Activated T-helper 1 cell treated with anti-CD3 and anti-CD28 coated beads, Interleukin-12 subunit alpha, Interleukin-12 subunit beta, Interleukin-2, Interleukin-4 antibody, amounts not matched to agents 30 ng/mL and 10 ng/mL and 1 ng/mL, durations not matched to agents 14 hours and 24 hours and 36 hours (primary cell): ENCODE measurements at regions of chr10 and their contacts with region 1.

Region 1: GRCh38 chr10:124916585-124917427 is 25.1 kb upstream of the ZRANB1 start:
- DNase-seq: peak; percentile 96
- H3K4me3 Mint-ChIP-seq: peak overlapping the region; percentile 93
- H3K27ac Mint-ChIP-seq: peak overlapping the region; percentile 96
- H3K4me1 Mint-ChIP-seq: peaks cover 40% of the 10 kb centered on the region
- H3K27me3 Mint-ChIP-seq: peaks cover 9% of the 10 kb centered on the region

Region 2: DNA sequence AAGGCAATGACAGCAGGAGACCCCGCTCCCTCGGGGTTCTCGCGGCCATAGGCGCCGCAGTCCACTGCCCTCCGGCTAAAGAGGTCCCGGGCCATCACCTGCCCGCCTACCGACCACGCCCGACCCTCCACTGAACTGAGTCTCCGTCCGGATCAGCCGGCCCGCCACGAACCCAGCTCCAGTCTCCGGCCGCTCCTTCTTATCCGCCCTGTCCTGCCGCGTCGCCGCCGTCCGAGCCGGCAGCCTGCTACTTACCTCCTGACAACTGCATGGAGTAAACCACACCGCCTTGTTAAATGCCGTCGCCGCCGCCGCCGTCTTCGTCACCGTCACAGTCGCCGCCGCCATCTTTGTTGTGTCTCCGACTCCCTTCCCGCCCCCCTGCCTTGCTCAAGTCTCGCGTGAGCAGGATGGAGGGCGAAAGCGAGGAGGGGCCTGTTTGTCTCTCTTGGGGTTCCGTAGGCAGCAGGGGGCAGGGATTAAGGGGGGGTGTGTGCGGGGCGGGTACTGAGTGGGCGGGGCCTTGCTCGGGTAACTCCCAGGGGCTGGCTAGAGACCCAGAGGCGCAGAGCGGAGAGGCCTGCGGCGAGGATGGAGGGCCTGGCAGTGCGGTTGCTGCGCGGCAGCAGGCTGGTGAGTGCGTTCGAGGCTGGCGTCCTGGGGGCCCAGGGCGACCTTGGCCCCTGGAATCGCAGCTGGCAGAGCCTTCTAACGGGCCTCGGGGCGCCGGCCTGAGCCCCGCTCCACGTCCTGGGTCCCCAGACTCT is 1908.2 kb before region 1 on chr10 and contains the starts of genes ACADSB and IKZF5:
- intact Hi-C with region 1: loop called (anchors 2 kb)
- DNase-seq: peak; percentile 94
- H3K4me3 Mint-ChIP-seq: peak within 1 kb of the TSS; percentile 95
- H3K27ac Mint-ChIP-seq: peak within 1 kb of the TSS; percentile 95
- H3K4me1 Mint-ChIP-seq: peaks cover 43% of the 10 kb centered on the region
- H3K27me3 Mint-ChIP-seq: no peaks in the 10 kb centered on the region
- total RNA-seq, gene ACADSB: 25.8 and 26.5 TPM in 2 replicates
- total RNA-seq, gene IKZF5: 17.4 and 21.9 TPM in 2 replicates

Region 3: DNA sequence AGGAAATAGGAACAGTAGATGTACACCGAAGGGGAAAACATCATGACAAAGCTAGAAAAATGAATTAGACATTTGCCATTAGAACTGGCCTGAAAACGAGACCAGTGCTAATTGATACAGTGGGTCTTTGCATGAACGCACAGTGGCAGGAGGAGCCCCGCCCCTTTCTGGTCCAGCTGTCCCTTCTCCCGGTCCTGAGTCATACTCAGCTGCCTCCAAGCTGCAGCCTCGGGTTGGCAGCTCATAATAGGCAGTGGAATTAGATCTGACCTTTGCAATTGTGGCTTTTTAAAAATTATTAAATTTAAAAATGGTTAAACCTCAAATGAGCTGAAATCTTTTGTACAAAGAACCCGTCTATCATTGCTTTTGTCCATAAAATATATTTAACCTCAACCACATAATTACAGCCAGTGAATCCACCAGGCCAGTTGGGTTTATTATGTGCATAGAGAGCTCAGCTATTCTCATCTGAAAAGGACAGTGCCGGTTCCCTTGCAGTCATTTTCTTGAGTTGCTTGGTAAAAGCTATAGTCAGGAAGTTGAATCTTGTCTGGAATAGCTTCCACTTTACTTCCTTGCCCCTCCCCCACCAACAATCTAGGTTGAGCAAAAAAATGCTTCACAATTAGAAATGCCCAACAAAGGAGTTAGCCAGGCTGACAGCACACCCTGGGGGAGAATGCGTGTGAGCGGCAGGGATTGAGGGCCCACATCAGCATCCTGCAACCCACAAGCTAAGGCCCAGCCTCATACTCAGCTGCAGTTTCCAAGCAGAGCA is 1615.5 kb before region 1 on chr10:
- intact Hi-C with region 1: no loop called
- DNase-seq: no peak
- H3K4me3 Mint-ChIP-seq: no peak overlapping the region
- H3K27ac Mint-ChIP-seq: no peak overlapping the region
- H3K4me1 Mint-ChIP-seq: no peaks in the 10 kb centered on the region
- H3K27me3 Mint-ChIP-seq: peaks cover 2% of the 10 kb centered on the region

Region 4: GRCh38 chr10:124461438-124462347 is 455.1 kb before region 1 on chr10 and contains the start of gene LHPP:
- intact Hi-C with region 1: loop called (anchors 2 kb)
- DNase-seq: peak; percentile 86
- H3K4me3 Mint-ChIP-seq: peak within 1 kb of the TSS; percentile 87
- H3K27ac Mint-ChIP-seq: peak within 1 kb of the TSS; percentile 98
- H3K4me1 Mint-ChIP-seq: peaks cover 26% of the 10 kb centered on the region
- H3K27me3 Mint-ChIP-seq: peaks cover 14% of the 10 kb centered on the region
- total RNA-seq, gene LHPP: 4.6 and 5.0 TPM in 2 replicates

Region 5: GRCh38 chr10:124688889-124689670 is 227.7 kb before region 1 on chr10:
- intact Hi-C with region 1: loop called (anchors 1 kb)
- DNase-seq: peak; percentile 73
- H3K4me3 Mint-ChIP-seq: peak overlapping the region; percentile 48
- H3K27ac Mint-ChIP-seq: peak overlapping the region; percentile 86
- H3K4me1 Mint-ChIP-seq: peaks cover 76% of the 10 kb centered on the region
- H3K27me3 Mint-ChIP-seq: no peaks in the 10 kb centered on the region

Region 6: DNA sequence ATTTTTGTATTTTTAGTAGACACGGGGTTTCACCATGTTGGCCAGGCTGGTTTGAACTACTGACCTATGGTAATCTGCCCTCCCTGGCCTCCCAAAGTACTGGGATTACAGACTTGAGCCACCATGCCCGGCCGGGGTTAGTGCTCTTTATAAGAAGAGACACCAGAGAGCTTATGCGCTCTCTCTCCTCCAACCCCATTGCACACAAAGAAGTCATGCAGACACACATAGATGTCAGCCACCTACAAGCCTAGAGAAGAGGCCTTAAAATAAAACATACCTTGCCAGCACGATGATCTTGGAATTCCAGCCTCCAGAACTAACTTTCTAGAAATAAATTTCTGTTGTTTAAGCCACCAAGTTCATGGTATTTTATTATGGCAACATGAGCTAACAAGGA is 162.6 kb before region 1 on chr10:
- intact Hi-C with region 1: no loop called
- DNase-seq: no peak
- H3K4me3 Mint-ChIP-seq: no peak overlapping the region
- H3K27ac Mint-ChIP-seq: no peak overlapping the region
- H3K4me1 Mint-ChIP-seq: peaks cover 5% of the 10 kb centered on the region
- H3K27me3 Mint-ChIP-seq: no peaks in the 10 kb centered on the region

Region 7: DNA sequence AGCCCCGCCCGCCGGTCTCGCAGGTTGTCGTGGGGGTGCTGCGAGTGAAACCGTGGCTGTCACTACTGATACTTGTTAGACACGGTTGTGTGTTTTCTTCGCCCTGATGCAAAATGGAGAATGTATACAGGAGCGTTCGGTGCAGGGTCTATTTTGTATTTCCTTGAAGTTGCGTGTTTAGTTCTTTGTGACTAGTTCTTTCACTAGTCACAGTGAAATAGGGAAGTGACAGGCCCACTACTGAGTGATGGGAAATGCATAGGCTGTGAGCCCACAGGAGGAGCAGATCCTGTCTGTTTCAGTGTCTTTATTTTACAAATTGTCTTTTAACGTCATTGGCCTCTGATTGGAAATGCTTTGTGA is 114.5 kb before region 1 on chr10:
- intact Hi-C with region 1: loop called (anchors 1 kb)
- DNase-seq: no peak
- H3K4me3 Mint-ChIP-seq: peak overlapping the region; percentile 95
- H3K27ac Mint-ChIP-seq: peak overlapping the region; percentile 89
- H3K4me1 Mint-ChIP-seq: peaks cover 19% of the 10 kb centered on the region
- H3K27me3 Mint-ChIP-seq: peaks cover 6% of the 10 kb centered on the region

Region 8: GRCh38 chr10:124992462-124993344 is 75.9 kb after region 1 on chr10:
- intact Hi-C with region 1: no loop called
- DNase-seq: no peak
- H3K4me3 Mint-ChIP-seq: no peak overlapping the region
- H3K27ac Mint-ChIP-seq: no peak overlapping the region
- H3K4me1 Mint-ChIP-seq: peaks cover 6% of the 10 kb centered on the region
- H3K27me3 Mint-ChIP-seq: no peaks in the 10 kb centered on the region

Region 9: DNA sequence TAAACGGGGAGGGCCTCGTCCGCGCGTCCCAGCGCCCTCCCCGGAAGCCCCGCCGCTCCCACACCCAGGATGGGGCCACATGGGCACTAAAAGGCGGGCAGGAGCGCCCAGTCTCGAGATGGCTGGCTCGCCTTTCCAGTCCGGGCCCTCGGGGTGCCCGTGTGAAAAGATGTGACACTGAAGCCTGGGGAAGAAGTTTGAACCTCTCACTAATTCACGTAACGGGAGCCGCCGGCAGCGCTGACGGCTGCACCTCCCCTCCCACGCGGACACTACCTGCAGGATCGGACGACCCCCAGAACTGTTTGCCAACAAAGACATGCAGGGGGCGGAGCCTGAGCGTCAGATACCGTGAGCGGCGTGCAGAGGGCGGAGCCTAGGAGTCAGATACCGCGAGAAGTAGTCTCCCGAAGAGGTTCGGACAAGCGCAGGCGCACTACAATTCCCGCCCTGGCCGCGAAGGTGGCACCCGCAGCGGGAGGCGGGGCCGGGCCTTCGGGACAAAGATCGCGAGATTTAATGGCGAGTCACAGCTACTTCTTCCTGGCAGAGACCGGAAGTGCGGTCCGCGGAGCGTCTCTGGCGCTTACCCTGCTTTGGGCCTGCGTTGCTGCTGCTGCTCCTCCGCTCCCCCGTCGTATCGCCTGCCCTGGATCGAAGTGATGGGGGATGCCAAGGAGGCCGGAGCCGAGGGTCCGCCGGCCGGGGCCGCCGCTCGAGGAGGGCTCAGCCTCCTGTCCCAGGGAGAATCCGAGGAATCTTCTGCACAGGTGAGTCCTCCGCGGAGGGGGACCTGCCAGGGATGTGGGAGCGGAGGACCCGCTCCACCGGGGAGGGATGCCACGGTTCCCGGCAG is 802.6 kb after region 1 on chr10 and contains the start of gene EDRF1:
- intact Hi-C with region 1: loop called (anchors 1 kb)
- DNase-seq: peak; percentile 100
- H3K4me3 Mint-ChIP-seq: peak within 1 kb of the TSS; percentile 98
- H3K27ac Mint-ChIP-seq: peak within 1 kb of the TSS; percentile 98
- H3K4me1 Mint-ChIP-seq: peaks cover 21% of the 10 kb centered on the region
- H3K27me3 Mint-ChIP-seq: no peaks in the 10 kb centered on the region
- total RNA-seq, gene EDRF1: 43.4 and 43.9 TPM in 2 replicates